MCF 10A (cell line): ENCODE measurements at regions of chrX and their contacts with region 1.

Region 1: GRCh38 chrX:48891402-48892288 is 5.9 kb downstream of the TIMM17B start:
- DNase-seq: peak; percentile 83
- H3K4me3 Mint-ChIP-seq: peak overlapping the region; percentile 72
- H3K27ac Mint-ChIP-seq: no peak overlapping the region
- H3K4me1 Mint-ChIP-seq: peaks cover 7% of the 10 kb centered on the region
- H3K27me3 Mint-ChIP-seq: no peaks in the 10 kb centered on the region
- CTCF ChIP-seq: peak; percentile 29

Region 2: GRCh38 chrX:48854898-48855297 is 36.7 kb before region 1 on chrX:
- CTCF ChIA-PET with region 1: interaction called, 3 read pairs
- POLR2A ChIA-PET with region 1: interaction called, 4 read pairs
- intact Hi-C with region 1: loop called (anchors 2 kb)
- DNase-seq: peak; percentile 11
- H3K4me3 Mint-ChIP-seq: peak overlapping the region; percentile 24
- H3K27ac Mint-ChIP-seq: peak overlapping the region; percentile 29
- H3K4me1 Mint-ChIP-seq: peaks cover 7% of the 10 kb centered on the region
- H3K27me3 Mint-ChIP-seq: no peaks in the 10 kb centered on the region
- CTCF ChIP-seq: peak; percentile 37

Region 3: GRCh38 chrX:48864210-48864609 is 27.4 kb before region 1 on chrX:
- CTCF ChIA-PET with region 1: interaction called, 6 read pairs
- POLR2A ChIA-PET with region 1: interaction called, 7 read pairs
- intact Hi-C with region 1: loop called (anchors 2 kb)
- DNase-seq: peak; percentile 14
- H3K4me3 Mint-ChIP-seq: no peak overlapping the region
- H3K27ac Mint-ChIP-seq: no peak overlapping the region
- H3K4me1 Mint-ChIP-seq: peaks cover 18% of the 10 kb centered on the region
- H3K27me3 Mint-ChIP-seq: no peaks in the 10 kb centered on the region
- CTCF ChIP-seq: no peak

Region 4: DNA sequence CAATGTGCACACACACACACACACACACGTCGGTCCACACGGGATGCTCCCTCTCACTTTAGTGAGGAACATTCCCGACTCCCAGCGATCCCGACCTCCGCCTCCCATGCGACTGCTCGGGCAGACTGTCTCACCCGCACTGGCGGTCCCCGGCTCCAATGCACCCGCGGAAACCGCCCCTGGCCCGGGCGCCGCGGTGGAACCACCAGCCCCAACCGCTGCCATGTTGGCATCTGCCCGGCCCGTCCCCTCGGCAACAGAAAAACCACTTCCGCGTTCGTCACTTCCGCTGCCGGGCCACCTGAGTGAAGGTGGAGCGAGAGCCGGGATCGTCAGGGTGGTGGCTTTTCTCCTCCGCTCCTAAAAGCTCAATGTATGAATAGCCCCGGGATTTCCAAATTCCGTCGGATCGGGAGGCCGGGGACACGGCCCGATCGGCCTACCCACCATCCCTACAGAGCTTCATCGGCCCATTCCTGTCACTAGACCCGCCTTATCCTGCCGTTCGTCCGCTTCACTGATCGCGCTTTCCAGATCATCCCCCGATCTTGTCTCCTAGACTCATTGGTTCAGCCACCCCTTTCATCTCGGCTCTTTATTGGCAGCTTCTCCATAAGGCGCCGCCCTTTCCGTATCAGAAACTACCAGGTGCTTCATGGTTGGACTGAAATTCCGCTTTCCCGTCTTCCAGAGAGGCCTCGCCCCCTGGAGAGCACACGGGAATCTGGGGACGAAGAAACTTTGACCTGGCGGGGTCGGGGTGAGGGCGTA is 20.0 kb after region 1 on chrX and contains the start of gene SLC35A2:
- CTCF ChIA-PET with region 1: interaction called, 7 read pairs
- POLR2A ChIA-PET with region 1: interaction called, 57 read pairs
- intact Hi-C with region 1: no loop called
- DNase-seq: peak; percentile 79
- H3K4me3 Mint-ChIP-seq: peak within 1 kb of the TSS; percentile 91
- H3K27ac Mint-ChIP-seq: peak within 1 kb of the TSS; percentile 99
- H3K4me1 Mint-ChIP-seq: peaks cover 17% of the 10 kb centered on the region
- H3K27me3 Mint-ChIP-seq: no peaks in the 10 kb centered on the region
- CTCF ChIP-seq: no peak
- total RNA-seq, gene SLC35A2: 38.6 and 43.5 TPM in 2 replicates

Region 5: GRCh38 chrX:48917139-48918001 is 25.7 kb after region 1 on chrX:
- CTCF ChIA-PET with region 1: interaction called, 7 read pairs
- POLR2A ChIA-PET with region 1: interaction called, 57 read pairs
- intact Hi-C with region 1: loop called (anchors 1 kb)
- DNase-seq: peak; percentile 88
- H3K4me3 Mint-ChIP-seq: peak overlapping the region; percentile 94
- H3K27ac Mint-ChIP-seq: peak overlapping the region; percentile 96
- H3K4me1 Mint-ChIP-seq: peaks cover 18% of the 10 kb centered on the region
- H3K27me3 Mint-ChIP-seq: no peaks in the 10 kb centered on the region
- CTCF ChIP-seq: peak; percentile 75

Region 6: GRCh38 chrX:49172280-49172780 is 280.7 kb after region 1 on chrX:
- CTCF ChIA-PET with region 1: no interaction called
- POLR2A ChIA-PET with region 1: no interaction called
- intact Hi-C with region 1: no loop called
- DNase-seq: peak; percentile 80
- H3K4me3 Mint-ChIP-seq: peak overlapping the region; percentile 88
- H3K27ac Mint-ChIP-seq: peak overlapping the region; percentile 54
- H3K4me1 Mint-ChIP-seq: peaks cover 20% of the 10 kb centered on the region
- H3K27me3 Mint-ChIP-seq: no peaks in the 10 kb centered on the region
- CTCF ChIP-seq: no peak